GM10248 (cell line): ENCODE measurements at regions of chr2 and their contacts with region 1.

Region 1: GRCh38 chr2:174748948-174749347 is 15.3 kb downstream of the CHRNA1 start:
- DNase-seq: peak; percentile 51
- CTCF ChIP-seq: peak; percentile 79

Region 2: DNA sequence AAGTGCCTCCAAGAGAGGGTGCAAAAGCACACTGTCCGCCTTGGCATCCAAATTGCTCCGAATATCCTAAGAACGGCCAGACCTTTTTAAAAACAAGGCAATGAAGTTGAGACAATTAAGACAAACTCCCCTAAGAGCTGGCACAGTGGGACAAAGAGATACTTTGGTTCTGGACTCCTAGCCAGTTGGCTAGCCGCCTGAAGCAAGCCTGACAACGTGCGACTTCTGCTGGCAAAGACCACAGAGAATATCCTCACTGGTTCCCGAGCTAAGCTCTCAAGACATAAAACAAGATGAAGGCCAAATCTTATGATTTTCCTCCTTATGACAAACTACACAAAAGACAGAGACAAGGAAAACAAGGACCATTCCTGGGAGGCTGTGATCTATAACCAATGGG is 17.4 kb before region 1 on chr2:
- CTCF ChIA-PET with region 1: interaction called, 29 read pairs
- POLR2A ChIA-PET with region 1: no interaction called
- DNase-seq: no peak
- CTCF ChIP-seq: no peak

Region 3: DNA sequence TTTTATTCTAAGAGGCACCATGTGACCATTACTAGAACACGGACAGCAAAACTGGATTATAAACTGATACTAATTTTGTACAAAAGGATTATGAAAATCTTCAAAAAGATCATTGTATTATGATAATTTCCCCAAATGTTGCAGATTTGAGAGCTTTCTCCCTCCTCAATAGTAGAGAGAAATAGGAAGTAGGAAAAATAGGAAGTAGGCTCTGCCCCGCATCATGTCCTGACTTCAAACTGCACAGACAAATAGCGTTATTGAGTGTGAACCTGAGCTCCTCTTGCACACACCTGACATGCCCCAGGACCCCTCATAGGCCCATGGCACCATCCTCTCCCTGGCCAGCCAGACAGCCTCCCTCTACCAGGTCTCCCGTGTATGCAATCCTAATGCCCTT is 10.1 kb before region 1 on chr2:
- CTCF ChIA-PET with region 1: interaction called, 29 read pairs
- POLR2A ChIA-PET with region 1: no interaction called
- DNase-seq: no peak
- CTCF ChIP-seq: no peak

Region 4: GRCh38 chr2:174764280-174765255 is 15.6 kb after region 1 on chr2 and contains the start of gene CHRNA1:
- CTCF ChIA-PET with region 1: interaction called, 13 read pairs
- POLR2A ChIA-PET with region 1: no interaction called
- DNase-seq: no peak
- CTCF ChIP-seq: no peak

Region 5: DNA sequence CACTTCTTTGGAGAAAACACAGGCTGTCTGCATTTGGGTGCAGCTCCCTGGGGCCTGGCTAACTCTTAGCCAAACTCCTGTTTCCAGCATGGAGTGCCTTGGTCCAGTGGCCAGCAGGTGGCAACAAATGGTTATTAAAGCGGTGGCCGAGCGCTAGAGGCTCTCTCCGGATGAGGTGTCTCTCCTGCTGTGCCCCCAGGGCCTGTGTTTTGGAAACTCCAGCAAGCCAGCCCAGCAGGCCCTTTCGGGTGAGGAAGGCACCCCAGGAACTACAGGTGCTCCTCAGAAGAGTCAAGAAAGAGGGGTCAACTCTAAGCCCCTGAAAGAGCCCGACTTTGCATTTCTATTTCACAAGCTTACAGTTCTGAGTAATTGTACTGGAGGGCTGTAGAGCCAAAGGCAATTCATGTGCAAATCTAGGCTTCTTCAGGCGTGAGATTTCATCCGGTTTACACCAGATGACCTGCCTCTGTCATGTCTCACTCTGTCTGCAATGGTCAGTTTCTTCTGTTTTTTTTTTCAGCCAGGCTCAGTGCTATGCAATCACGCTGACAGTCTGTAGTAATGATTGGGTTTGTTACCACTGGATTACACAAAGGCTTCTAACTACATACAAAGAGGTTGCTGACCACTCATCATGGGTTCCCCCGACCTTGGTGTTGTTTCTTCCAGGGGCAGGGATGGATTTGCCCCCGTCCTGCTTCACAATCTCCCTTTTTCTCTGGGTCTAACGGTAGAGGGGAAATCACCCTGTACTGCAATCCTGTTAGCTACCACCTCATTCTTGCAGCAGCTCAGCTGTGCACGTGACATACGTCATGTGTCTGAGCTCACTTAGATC is 22.9 kb after region 1 on chr2:
- CTCF ChIA-PET with region 1: interaction called, 22 read pairs
- POLR2A ChIA-PET with region 1: no interaction called
- DNase-seq: peak; percentile 69
- CTCF ChIP-seq: peak; percentile 84

Region 6: DNA sequence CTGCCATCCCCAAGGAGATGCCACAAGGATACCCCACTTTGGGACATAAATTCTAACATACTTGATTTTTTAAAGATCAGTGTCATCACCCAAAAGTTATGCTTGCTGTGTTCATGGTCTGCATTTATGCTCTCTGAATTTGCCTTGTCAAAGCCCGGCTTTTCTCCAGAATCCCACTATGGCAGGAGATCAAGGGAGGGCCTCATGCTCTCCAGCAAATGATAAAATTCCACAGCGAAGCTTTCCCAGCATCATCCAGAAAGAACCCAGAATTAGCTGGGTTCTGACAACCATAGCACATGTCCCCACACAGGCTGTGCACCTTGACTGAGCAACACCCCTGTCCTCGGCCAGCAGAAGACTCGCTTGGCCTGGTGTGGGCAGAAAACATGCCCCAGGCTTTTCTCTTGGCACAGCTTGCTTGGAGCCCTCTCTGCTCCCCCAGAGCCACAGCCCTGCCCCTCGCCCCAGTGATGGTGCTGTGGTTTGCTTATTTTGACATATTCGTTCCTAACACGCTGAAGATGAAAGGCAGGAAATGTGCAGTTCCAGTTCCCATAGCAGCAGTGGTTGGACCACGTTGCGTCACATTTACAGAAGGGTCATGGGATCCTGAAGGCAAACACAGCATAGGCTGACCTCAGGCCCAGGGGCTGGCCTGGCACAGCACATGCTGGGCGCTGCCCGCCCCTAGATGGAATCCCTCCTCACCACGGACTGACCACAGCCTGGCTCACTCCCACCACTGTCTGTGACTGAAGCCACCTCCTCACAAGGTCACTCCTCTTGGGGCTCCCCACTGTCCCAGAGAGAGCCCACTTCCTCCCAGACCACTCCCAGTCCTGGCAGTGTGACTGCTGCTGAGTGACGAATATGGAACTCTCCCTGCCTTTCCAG is 29.4 kb after region 1 on chr2:
- CTCF ChIA-PET with region 1: interaction called, 22 read pairs
- POLR2A ChIA-PET with region 1: no interaction called
- DNase-seq: peak; percentile 56
- CTCF ChIP-seq: no peak

Region 7: GRCh38 chr2:174827371-174828369 is 78.7 kb after region 1 on chr2:
- CTCF ChIA-PET with region 1: no interaction called
- POLR2A ChIA-PET with region 1: no interaction called
- DNase-seq: no peak
- CTCF ChIP-seq: no peak

Region 8: DNA sequence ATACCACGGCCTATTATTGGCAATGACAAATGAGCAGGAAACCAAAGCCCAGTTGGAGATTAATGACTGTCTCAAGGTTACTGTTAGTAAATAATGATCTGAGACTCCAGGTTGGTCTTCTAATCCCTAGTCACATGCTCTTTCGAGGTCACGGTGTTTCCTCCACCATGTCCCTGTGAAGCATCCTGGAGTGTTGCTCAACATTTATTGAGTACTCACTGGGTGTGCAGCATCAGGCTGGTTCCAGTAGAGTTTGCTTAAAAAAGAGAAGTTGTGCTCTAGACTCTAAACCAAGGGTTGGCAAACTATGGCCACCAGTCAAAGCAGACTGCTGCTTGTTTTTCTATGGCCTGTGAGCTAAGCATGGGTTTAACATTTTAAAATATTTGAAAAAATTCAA is 696.3 kb after region 1 on chr2:
- CTCF ChIA-PET with region 1: no interaction called
- POLR2A ChIA-PET with region 1: no interaction called
- DNase-seq: no peak
- CTCF ChIP-seq: no peak